ENCODE measurements at regions of chr5 and their contacts with region 1.

Region 1: GRCh38 chr5:142145106-142145900 is 36.7 kb downstream of the NDFIP1 start:
- DNase-seq: peak; percentile 78
- H3K4me3 Mint-ChIP-seq: no peak overlapping the region
- H3K27ac Mint-ChIP-seq: no peak overlapping the region
- H3K4me1 Mint-ChIP-seq: no peaks in the 10 kb centered on the region
- H3K27me3 Mint-ChIP-seq: no peaks in the 10 kb centered on the region

Region 2: GRCh38 chr5:141567513-141568117 is 577.7 kb before region 1 on chr5:
- CTCF ChIA-PET with region 1: no interaction called
- DNase-seq: no peak
- H3K4me3 Mint-ChIP-seq: no peak overlapping the region
- H3K27ac Mint-ChIP-seq: no peak overlapping the region
- H3K4me1 Mint-ChIP-seq: peaks cover 18% of the 10 kb centered on the region
- H3K27me3 Mint-ChIP-seq: no peaks in the 10 kb centered on the region

Region 3: GRCh38 chr5:141968914-141969608 is 176.2 kb before region 1 on chr5 and contains the start of gene RNF14:
- CTCF ChIA-PET with region 1: interaction called, 15 read pairs
- DNase-seq: peak; percentile 96
- H3K4me3 Mint-ChIP-seq: peak within 1 kb of the TSS; percentile 80
- H3K27ac Mint-ChIP-seq: peak within 1 kb of the TSS; percentile 97
- H3K4me1 Mint-ChIP-seq: peaks cover 35% of the 10 kb centered on the region
- H3K27me3 Mint-ChIP-seq: peaks cover 5% of the 10 kb centered on the region

Region 4: GRCh38 chr5:141992349-141992963 is 152.8 kb before region 1 on chr5:
- CTCF ChIA-PET with region 1: interaction called, 158 read pairs
- DNase-seq: peak; percentile 87
- H3K4me3 Mint-ChIP-seq: no peak overlapping the region
- H3K27ac Mint-ChIP-seq: no peak overlapping the region
- H3K4me1 Mint-ChIP-seq: no peaks in the 10 kb centered on the region
- H3K27me3 Mint-ChIP-seq: no peaks in the 10 kb centered on the region

Region 5: GRCh38 chr5:142000703-142001484 is 144.4 kb before region 1 on chr5:
- CTCF ChIA-PET with region 1: interaction called, 158 read pairs
- DNase-seq: no peak
- H3K4me3 Mint-ChIP-seq: no peak overlapping the region
- H3K27ac Mint-ChIP-seq: no peak overlapping the region
- H3K4me1 Mint-ChIP-seq: peaks cover 36% of the 10 kb centered on the region
- H3K27me3 Mint-ChIP-seq: no peaks in the 10 kb centered on the region

Region 6: GRCh38 chr5:142012792-142013388 is 132.4 kb before region 1 on chr5 and contains the start of gene GNPDA1:
- CTCF ChIA-PET with region 1: interaction called, 137 read pairs
- DNase-seq: peak; percentile 77
- H3K4me3 Mint-ChIP-seq: peak within 1 kb of the TSS; percentile 82
- H3K27ac Mint-ChIP-seq: peak within 1 kb of the TSS; percentile 96
- H3K4me1 Mint-ChIP-seq: peaks cover 91% of the 10 kb centered on the region
- H3K27me3 Mint-ChIP-seq: no peaks in the 10 kb centered on the region

Region 7: GRCh38 chr5:142108432-142109330 is 36.6 kb before region 1 on chr5 and contains the start of gene NDFIP1:
- CTCF ChIA-PET with region 1: interaction called, 16 read pairs
- DNase-seq: peak; percentile 89
- H3K4me3 Mint-ChIP-seq: peak within 1 kb of the TSS; percentile 97
- H3K27ac Mint-ChIP-seq: peak within 1 kb of the TSS; percentile 98
- H3K4me1 Mint-ChIP-seq: peaks cover 77% of the 10 kb centered on the region
- H3K27me3 Mint-ChIP-seq: no peaks in the 10 kb centered on the region

Region 8: DNA sequence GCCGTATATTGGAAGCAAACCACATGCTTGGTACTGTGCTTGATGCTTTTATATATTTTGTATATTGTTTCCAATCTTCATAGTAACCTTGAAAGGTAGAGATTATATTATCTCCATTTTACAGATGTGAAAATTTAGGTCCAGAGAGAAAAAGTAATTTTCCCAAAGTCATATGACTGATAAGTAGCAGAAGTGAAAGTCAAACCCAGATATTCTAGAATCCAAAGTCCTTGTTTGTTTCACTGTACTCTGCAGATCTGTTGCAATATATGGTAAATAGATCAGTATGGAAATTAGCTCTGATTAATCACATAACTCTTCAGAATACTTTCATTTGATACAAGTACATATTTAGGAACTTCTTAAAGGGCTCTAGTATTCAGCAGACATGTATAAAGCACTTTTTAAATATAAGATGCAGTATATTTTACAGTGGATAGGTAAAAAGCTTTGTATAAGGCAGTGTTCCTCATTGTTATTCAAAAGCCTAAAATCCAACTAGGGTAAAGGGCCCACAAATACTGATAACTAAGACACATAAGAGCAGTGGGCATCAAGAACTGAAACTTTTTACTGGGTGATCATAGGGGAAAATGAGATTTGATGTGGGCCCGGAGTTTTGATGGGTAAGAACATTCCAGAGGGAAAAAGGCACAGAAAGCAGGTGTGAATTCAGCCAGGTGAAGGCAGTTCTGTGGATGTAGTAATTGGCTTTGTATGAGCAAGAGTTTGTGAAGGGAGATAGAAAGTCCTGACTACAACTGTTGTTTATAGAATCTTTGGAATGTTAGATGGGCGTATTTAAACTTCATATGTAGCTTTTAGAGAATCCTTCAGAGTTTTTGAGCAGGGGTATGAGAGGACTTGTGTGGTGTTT is 11.7 kb before region 1 on chr5:
- CTCF ChIA-PET with region 1: interaction called, 15 read pairs
- DNase-seq: no peak
- H3K4me3 Mint-ChIP-seq: no peak overlapping the region
- H3K27ac Mint-ChIP-seq: no peak overlapping the region
- H3K4me1 Mint-ChIP-seq: peaks cover 33% of the 10 kb centered on the region
- H3K27me3 Mint-ChIP-seq: no peaks in the 10 kb centered on the region

Measured in activated naive CD4-positive, alpha-beta T cell treated with anti-CD3 and anti-CD28 coated beads, Interleukin-2, amount 10 ng/mL, durations not matched to agents 7 days and 5 days (primary cell).